BJ (cell line): ENCODE measurements at regions of chr19 and their contacts with region 1.

Region 1: DNA sequence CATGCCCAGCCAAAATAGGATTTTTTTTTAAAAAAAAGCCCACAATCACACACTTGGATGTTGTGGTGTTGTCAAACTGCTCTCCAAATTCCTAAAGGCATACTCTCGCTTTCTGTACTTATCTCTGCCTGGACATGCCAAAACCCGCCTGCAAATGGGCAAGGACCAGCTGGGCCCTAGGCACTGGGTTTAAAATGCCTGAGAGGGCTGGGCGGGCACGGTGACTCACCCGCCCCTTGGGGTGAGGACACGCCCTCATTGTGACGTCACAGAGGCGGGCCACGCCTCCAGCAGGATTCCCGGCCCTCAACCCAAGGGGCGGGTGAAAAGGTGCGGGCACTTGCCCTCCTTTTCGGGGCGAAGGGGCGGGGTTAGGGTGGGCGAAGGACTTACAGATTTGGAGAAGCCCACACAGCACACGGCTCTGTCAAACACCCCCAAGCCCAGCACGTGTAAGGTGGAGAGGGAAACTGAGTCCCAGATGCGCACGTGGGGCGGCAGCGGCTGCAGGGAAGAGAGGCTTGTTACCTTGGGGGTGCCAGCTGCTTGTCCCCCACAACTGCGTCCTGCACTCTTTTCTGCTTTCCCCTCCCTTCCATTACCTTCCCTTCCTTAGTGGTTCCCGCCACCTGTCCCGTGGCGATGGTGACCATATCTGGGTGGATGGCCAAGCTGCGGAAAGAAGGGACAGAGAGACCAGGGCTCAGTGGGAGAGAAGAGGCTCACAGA is 6.6 kb downstream of the EML2 start:
- DNase-seq: no peak
- H3K4me3 ChIP-seq: no peak overlapping the region
- H3K27me3 ChIP-seq: no peaks in the 10 kb centered on the region
- CTCF ChIP-seq: no peak

Region 2: DNA sequence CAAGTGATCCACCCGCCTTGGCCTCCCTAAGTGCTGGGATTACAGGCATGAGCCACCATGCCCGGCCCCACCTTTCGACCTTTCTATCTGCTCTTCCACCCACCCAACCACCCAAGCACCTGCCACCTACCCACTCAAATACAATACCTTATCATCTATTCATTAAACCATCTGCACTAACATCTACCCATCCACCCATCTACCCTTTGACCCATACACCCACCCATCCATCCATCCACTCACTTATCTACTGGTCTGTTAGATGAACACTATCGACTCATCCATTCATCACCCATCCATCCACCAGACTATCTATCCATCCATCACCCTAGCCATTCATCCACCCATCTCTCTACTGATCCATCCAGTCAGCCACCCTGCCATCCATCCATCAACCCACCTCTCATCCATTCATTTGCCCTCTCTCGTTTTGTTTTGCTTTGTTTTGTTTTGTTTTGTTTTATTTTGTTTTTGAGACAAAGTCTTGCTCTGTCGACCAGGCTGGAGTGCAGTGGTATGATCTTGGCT is 10.6 kb before region 1 on chr19:
- CTCF ChIA-PET with region 1: no interaction called
- POLR2A ChIA-PET with region 1: no interaction called
- DNase-seq: no peak
- H3K4me3 ChIP-seq: no peak overlapping the region
- H3K27me3 ChIP-seq: no peaks in the 10 kb centered on the region
- CTCF ChIP-seq: no peak

Region 3: GRCh38 chr19:45717166-45717982 is 84.7 kb after region 1 on chr19:
- CTCF ChIA-PET with region 1: no interaction called
- POLR2A ChIA-PET with region 1: interaction called, 10 read pairs
- DNase-seq: peak; percentile 94
- H3K4me3 ChIP-seq: peak overlapping the region; percentile 48
- H3K27me3 ChIP-seq: no peaks in the 10 kb centered on the region
- CTCF ChIP-seq: peak; percentile 49